ENCODE measurements at regions of chr7 and their contacts with region 1.

Region 1: DNA sequence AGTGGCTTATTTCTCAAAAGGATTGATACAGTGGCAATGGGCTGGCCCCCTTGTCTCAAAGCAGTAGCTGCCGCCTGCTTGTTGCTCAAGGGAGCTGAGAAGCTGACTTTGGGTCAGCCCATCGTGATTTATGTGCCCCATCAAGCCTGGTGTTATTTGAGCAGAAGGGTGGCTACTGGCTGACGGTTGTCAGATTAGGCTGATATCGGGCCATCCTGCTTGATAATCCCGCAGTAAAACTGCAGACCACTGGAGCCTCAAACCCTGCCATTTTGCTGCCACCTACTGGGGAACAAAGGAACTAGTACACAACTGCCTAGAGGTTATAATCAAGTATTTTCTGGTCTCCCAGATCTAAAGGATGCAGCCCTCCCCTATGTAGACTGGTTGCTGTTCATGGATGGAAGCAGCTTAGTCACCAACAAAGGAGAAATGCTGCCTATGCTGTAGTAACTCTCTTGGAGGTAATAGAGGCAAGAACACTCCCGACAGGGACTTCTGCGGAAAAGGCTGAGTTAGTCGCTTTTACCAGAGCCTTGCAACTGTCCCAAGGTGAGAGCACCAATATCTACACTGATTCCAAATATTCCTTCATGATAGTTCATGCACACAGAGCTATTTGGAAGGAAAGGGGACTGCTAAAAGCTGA is 65.9 kb upstream of the ZNF92 start:
- DNase-seq: peak; percentile 75
- ATAC-seq: peak; percentile 82
- H3K4me3 ChIP-seq: no peak overlapping the region
- H3K4me3 Mint-ChIP-seq: no peak overlapping the region
- H3K27ac ChIP-seq: no peak overlapping the region
- H3K27ac Mint-ChIP-seq: no peak overlapping the region
- H3K4me1 ChIP-seq: peaks cover 0 to 2% of the 10 kb centered on the region in 2 donors
- H3K4me1 Mint-ChIP-seq: peaks cover 4% of the 10 kb centered on the region
- H3K27me3 ChIP-seq: peaks cover 0 to 6% (median 2%) of the 10 kb centered on the region in 4 experiments
- H3K27me3 Mint-ChIP-seq: no peaks in the 10 kb centered on the region
- CTCF ChIP-seq: peak; percentile 88

Region 2: DNA sequence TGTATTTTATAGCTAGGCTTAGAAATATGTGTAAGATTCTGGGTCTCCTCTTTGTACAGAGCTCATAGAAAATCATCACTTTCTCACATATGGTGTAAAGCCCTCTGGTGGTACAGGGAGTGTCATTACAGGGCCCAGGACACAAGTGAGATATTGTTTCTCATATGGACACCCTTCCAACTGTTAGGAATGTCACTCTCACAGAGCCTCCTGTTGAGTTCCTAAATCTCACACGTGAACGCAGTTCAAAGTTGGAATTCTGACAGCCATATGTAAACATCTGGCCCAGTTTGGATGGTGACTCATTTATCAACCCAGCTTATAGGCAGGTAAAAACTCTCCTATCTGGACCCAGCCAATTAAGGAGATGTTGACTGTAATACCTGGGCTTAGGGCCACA is 677.3 kb before region 1 on chr7:
- CTCF ChIA-PET with region 1: no interaction called
- POLR2A ChIA-PET with region 1: no interaction called
- intact Hi-C with region 1: loop called (anchors 10 kb)
- DNase-seq: peak; percentile 17
- ATAC-seq: peak; percentile 58
- H3K4me3 ChIP-seq: no peak overlapping the region
- H3K4me3 Mint-ChIP-seq: no peak overlapping the region
- H3K27ac ChIP-seq: no peak overlapping the region
- H3K27ac Mint-ChIP-seq: no peak overlapping the region
- H3K4me1 ChIP-seq: no peaks in the 10 kb centered on the region
- H3K4me1 Mint-ChIP-seq: peaks cover 4% of the 10 kb centered on the region
- H3K27me3 ChIP-seq: no peaks in the 10 kb centered on the region
- H3K27me3 Mint-ChIP-seq: no peaks in the 10 kb centered on the region
- CTCF ChIP-seq: peak; percentile 62

Region 3: DNA sequence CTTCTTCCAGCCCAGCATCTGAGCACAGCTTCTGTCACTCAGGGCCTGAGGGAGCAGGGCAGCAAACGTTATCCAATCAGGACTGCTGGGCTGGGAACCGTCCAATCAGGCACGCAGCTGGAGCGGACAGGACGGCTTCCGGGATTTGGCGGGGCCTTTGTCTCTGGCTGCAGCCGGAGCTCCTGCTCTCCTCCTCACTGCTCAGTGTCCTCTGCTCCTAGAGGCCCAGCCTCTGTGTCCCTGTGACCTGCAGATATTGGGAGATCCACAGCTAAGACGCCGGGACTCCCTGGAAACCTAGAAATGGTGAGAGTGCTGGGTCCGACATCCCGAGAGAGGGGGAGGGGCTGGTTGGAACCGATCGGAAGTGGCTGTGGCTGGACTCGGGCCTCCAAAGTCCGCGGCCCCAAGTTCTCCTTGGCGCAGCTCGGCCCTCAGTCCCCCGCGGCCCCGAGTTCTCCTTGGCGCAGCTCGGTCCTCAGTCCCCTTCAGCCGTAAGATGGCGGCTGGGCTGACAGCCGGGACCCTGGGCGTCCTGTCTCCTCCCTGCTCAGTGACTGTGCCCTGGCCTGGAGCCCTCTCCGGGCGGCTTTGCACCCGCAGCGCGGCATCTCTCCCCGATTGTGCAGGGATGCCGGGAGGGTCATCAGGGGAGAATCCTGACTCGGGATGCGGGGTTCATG is 641.7 kb before region 1 on chr7 and contains the start of gene ZNF107:
- CTCF ChIA-PET with region 1: no interaction called
- POLR2A ChIA-PET with region 1: no interaction called
- intact Hi-C with region 1: no loop called
- DNase-seq: peak; percentile 88
- ATAC-seq: peak; percentile 96
- H3K4me3 ChIP-seq: peak within 1 kb of the TSS; percentile 70 to 100 (median 96)
- H3K4me3 Mint-ChIP-seq: peak within 1 kb of the TSS; percentile 97
- H3K27ac ChIP-seq: peak within 1 kb of the TSS; percentile 92 to 96
- H3K27ac Mint-ChIP-seq: peak within 1 kb of the TSS; percentile 97
- H3K4me1 ChIP-seq: peaks cover 35 to 37% of the 10 kb centered on the region in 2 donors
- H3K4me1 Mint-ChIP-seq: peaks cover 59% of the 10 kb centered on the region
- H3K27me3 ChIP-seq: no peaks in the 10 kb centered on the region
- H3K27me3 Mint-ChIP-seq: no peaks in the 10 kb centered on the region
- CTCF ChIP-seq: no peak
- total RNA-seq, gene ZNF107: 70.7 and 73.7 TPM in 2 replicates

Region 4: DNA sequence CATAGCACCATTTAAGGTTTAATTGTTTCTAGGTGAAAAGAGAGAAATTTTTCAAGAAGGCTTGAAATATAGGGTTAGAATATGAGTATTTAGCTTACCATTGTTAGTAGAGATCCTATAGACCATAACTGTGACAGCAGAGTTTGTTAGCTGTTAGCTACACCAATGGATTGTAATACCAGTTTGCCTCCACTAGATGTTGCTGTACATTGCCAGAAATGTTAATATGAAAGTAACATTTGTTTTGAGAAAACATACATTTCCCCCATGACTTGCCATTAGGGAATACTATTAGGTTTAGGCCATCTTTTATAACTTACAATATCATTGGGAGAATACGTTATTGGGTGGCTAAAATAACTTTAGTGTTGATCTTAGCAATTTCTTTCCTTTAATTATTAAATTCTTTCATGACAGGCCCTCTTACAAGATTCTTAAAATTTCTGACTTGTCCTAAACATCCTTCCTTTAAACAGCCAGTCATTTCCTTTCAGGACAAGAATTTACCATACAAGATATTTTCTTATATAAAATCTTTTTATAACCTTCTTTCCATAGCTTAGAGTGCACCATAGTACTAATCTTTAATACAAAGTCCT is 356.4 kb before region 1 on chr7:
- CTCF ChIA-PET with region 1: interaction called, 63 read pairs
- POLR2A ChIA-PET with region 1: no interaction called
- intact Hi-C with region 1: no loop called
- DNase-seq: peak; percentile 68
- ATAC-seq: peak; percentile 62
- H3K4me3 ChIP-seq: no peak overlapping the region
- H3K4me3 Mint-ChIP-seq: no peak overlapping the region
- H3K27ac ChIP-seq: no peak overlapping the region
- H3K27ac Mint-ChIP-seq: no peak overlapping the region
- H3K4me1 ChIP-seq: peaks cover 9 to 12% of the 10 kb centered on the region in 2 donors
- H3K4me1 Mint-ChIP-seq: peaks cover 4% of the 10 kb centered on the region
- H3K27me3 ChIP-seq: peaks cover 0 to 32% (median 19%) of the 10 kb centered on the region in 4 experiments
- H3K27me3 Mint-ChIP-seq: peaks cover 28% of the 10 kb centered on the region
- CTCF ChIP-seq: peak; percentile 84

Region 5: DNA sequence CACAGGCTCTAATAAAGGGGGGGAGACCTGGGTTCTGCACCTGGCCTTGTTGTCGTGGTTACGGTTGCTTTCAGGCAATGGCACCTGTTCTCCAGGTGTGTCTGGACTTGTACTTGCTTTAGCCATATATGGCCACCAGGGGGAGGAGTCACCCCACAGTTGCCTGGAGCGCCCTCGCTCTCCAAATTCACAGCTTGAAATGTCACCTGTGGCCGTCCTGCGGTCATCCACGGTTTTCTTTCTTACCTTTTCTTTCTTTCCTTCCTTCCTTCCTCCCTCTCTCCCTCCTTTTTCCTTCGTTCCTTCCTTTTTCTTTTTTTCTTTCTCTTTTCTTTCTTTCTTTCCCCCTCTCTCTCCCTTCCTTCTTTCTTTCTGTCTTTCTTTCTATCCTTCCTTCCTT is 91.3 kb before region 1 on chr7:
- CTCF ChIA-PET with region 1: interaction called, 15 read pairs
- POLR2A ChIA-PET with region 1: no interaction called
- intact Hi-C with region 1: loop called (anchors 1 kb)
- DNase-seq: peak; percentile 82
- ATAC-seq: peak; percentile 76
- H3K4me3 ChIP-seq: no peak overlapping the region
- H3K4me3 Mint-ChIP-seq: peak overlapping the region; percentile 19
- H3K27ac ChIP-seq: no peak overlapping the region
- H3K27ac Mint-ChIP-seq: no peak overlapping the region
- H3K4me1 ChIP-seq: no peaks in the 10 kb centered on the region
- H3K4me1 Mint-ChIP-seq: peaks cover 5% of the 10 kb centered on the region
- H3K27me3 ChIP-seq: no peaks in the 10 kb centered on the region
- H3K27me3 Mint-ChIP-seq: no peaks in the 10 kb centered on the region
- CTCF ChIP-seq: peak; percentile 79

Region 6: DNA sequence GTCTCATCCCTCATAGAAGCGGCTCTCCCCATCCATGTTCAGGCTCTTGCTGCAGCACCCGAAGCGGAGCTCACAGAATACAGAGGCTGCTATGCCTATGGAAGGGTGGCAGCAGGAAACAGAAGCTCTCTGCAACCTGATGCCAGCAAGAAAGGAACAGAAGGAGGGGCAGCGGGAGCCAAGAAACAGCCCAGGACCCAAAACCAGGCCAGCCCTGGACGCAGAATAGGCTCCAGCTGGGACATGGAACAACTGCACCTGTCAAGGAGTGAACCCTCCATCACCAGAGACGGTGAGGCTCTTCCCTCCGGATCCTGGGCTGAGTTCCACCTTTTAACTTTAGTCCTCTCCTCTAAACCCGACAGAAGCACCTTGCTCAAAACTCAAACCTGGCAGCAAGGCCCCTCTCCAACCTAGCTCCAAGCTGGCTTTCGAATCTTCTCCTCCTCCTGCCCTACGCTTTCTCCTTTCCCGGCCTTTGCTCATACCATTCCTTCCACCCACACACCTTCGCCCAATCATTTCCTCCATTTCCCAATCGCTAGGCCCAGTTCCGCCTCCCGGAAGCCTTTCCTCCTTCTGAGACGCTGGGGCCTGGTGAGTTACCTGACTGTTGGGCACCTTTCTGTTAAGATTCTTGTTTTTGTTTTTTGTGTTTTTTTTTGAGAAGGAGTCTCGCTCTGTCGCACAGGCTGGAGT is 56.9 kb before region 1 on chr7:
- CTCF ChIA-PET with region 1: interaction called, 3 read pairs
- POLR2A ChIA-PET with region 1: interaction called, 10 read pairs
- intact Hi-C with region 1: no loop called
- DNase-seq: no peak
- ATAC-seq: no peak
- H3K4me3 ChIP-seq: no peak overlapping the region
- H3K4me3 Mint-ChIP-seq: peak overlapping the region; percentile 38
- H3K27ac ChIP-seq: no peak overlapping the region
- H3K27ac Mint-ChIP-seq: no peak overlapping the region
- H3K4me1 ChIP-seq: peaks cover 4 to 11% of the 10 kb centered on the region in 2 donors
- H3K4me1 Mint-ChIP-seq: peaks cover 10% of the 10 kb centered on the region
- H3K27me3 ChIP-seq: peaks cover 0 to 13% (median 0%) of the 10 kb centered on the region in 4 experiments
- H3K27me3 Mint-ChIP-seq: peaks cover 22% of the 10 kb centered on the region
- CTCF ChIP-seq: no peak

Region 7: DNA sequence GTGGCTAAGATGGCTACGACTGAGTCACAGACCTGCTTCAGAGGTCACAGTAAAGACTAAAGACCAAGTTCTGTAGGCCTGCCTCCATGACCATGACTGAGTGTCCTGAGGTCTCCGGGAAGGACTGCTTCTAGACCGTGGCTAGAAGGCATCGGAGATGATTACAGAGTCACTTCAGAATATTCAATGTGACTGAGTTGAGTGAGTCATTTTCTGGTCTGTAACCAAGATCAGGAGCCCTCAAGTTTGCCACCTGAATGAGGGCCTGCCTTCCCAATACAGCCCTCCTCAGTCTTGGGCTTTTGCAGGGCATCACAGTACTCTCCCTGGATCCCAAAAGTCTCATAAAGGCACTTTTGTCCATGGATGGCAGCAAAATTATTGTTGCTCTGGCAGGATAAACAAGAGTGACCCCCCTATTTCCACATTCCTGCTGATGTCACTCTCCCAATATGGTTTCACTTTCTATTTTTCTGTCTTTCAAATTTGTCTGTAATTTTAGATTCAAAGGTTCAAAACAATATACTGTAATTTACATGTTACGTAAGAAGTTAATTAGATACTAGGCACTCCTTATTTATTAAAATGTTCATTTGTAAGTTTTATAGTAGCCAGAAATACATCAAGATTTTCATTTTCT is 18.1 kb after region 1 on chr7:
- CTCF ChIA-PET with region 1: interaction called, 11 read pairs
- POLR2A ChIA-PET with region 1: no interaction called
- intact Hi-C with region 1: no loop called
- DNase-seq: no peak
- ATAC-seq: no peak
- H3K4me3 ChIP-seq: no peak overlapping the region
- H3K4me3 Mint-ChIP-seq: no peak overlapping the region
- H3K27ac ChIP-seq: no peak overlapping the region
- H3K27ac Mint-ChIP-seq: no peak overlapping the region
- H3K4me1 ChIP-seq: no peaks in the 10 kb centered on the region
- H3K4me1 Mint-ChIP-seq: peaks cover 8% of the 10 kb centered on the region
- H3K27me3 ChIP-seq: no peaks in the 10 kb centered on the region
- H3K27me3 Mint-ChIP-seq: no peaks in the 10 kb centered on the region
- CTCF ChIP-seq: no peak